ENCODE measurements at regions of chrX and their contacts with region 1.

Region 1: GRCh38 chrX:105190252-105190853 is 30.1 kb downstream of the TEX13A start:
- DNase-seq: peak; percentile 22
- H3K4me3 ChIP-seq: no peak overlapping the region
- H3K27ac ChIP-seq: no peak overlapping the region
- H3K4me1 ChIP-seq: no peaks in the 10 kb centered on the region
- H3K27me3 ChIP-seq: peaks cover 3% of the 10 kb centered on the region
- CTCF ChIP-seq: peak; percentile 78 to 93

Region 2: DNA sequence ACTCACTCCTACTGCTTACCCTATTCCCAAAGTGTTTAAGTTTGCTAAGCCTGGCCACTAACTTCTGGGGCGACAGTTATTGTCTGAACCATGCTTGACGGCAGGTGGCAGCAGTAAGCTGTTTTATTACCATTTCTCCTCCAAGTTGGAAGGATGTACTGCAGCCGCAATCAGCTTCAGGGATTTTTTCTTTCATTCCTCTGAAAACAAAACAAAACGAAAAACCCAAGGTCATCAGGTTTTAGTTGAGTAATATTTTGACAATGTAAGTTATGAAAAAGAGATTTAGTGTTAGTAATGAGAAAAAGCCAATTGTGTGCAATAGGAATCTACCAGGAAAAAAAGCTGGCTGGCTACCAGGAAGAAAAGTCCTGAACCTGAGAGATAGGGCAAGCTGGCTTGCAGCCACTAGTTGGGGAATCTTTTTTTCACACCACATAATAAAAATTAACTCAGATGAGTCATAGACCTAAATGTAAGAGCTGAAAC is 1345.1 kb before region 1 on chrX:
- CTCF ChIA-PET with region 1: no interaction called
- dilution Hi-C with region 1: no loop called
- in situ Hi-C with region 1: no loop called
- intact Hi-C with region 1: loop called (anchors 5 kb)
- DNase-seq: peak; percentile 86
- H3K4me3 ChIP-seq: no peak overlapping the region
- H3K27ac ChIP-seq: peak overlapping the region; percentile 94
- H3K4me1 ChIP-seq: peaks cover 20% of the 10 kb centered on the region
- H3K27me3 ChIP-seq: no peaks in the 10 kb centered on the region
- CTCF ChIP-seq: peak; percentile 65 to 80

Region 3: DNA sequence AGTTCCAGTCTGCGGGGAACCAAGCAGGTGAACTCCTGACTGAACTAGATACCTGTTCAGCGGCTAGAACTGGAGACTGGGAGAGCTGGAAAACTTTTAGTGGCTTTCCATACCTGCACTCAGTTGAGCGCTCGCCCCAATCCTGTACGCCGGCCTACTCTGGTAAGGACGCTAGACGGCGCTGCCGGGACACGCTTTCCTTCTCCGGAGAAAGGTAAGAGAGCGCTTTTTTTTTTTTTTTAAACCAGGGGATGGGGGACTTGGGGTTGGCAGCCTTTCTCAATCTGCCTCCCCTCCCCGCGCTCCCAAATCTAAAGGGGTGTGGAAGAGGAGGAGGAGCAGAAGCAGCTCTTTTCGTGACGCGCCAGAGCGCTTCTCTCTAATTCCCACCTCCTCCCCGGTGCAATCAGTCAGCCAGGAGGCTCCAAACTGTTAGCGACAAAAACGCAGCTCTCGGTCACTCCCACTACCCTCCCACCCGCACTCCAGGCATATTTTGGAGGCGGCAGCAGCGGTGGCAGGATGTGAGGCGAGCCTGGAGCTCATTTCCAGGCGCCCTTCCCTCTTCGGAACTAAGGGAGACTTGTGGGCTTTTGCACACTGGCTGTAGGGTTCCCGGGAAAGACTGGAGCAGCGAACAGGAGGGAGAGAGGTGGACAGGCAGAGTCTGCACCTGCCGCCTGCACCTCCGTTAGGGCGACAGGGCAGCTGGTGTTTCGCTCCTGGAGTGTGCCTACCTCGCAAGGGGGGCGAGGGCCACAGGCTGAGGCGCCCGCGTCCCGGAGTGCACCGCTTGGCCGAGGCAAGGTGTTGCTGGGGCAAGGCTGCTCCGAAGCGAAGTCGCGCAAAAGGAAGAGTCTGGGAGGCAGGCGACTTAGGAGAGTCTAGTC is 624.3 kb before region 1 on chrX and contains the start of gene IL1RAPL2:
- CTCF ChIA-PET with region 1: interaction called, 5 read pairs
- dilution Hi-C with region 1: no loop called
- in situ Hi-C with region 1: no loop called
- intact Hi-C with region 1: loop called (anchors 10 kb)
- DNase-seq: peak; percentile 58
- H3K4me3 ChIP-seq: peak within 1 kb of the TSS; percentile 46 to 55 (median 53)
- H3K27ac ChIP-seq: no peak within 1 kb of the TSS
- H3K4me1 ChIP-seq: peaks cover 3% of the 10 kb centered on the region
- H3K27me3 ChIP-seq: peaks cover 4% of the 10 kb centered on the region
- CTCF ChIP-seq: peak; percentile 64 to 84
- total RNA-seq, gene IL1RAPL2: 0.19 to 0.50 TPM

Region 4: DNA sequence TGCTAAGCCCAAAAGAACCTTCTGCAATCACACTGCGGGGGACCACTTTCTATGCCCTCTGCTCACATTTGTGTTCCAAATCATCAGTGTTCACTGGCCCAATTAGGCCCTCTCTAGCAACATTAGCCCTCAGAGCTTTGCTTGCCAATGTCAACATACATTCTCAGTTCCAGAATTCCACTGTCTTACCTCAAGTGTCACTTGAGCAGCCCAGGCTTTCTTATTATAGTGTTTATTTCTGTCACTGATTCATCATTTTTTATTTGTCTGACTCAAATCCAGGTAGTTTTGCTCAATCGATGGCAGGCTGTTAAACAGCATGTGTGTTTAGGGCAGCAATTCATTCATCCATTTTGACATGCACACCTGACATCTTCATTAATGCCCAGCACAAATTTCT is 261.0 kb before region 1 on chrX:
- CTCF ChIA-PET with region 1: no interaction called
- dilution Hi-C with region 1: no loop called
- in situ Hi-C with region 1: loop called in 1 of 2 experiments (anchors 25 kb)
- intact Hi-C with region 1: loop called (anchors 5 kb)
- DNase-seq: no peak
- H3K4me3 ChIP-seq: no peak overlapping the region
- H3K27ac ChIP-seq: no peak overlapping the region
- H3K4me1 ChIP-seq: no peaks in the 10 kb centered on the region
- H3K27me3 ChIP-seq: peaks cover 11% of the 10 kb centered on the region
- CTCF ChIP-seq: no peak

Region 5: GRCh38 chrX:105552395-105552794 is 362.0 kb after region 1 on chrX:
- CTCF ChIA-PET with region 1: no interaction called
- dilution Hi-C with region 1: no loop called
- in situ Hi-C with region 1: no loop called
- intact Hi-C with region 1: loop called (anchors 1 kb)
- DNase-seq: peak; percentile 94
- H3K4me3 ChIP-seq: no peak overlapping the region
- H3K27ac ChIP-seq: peak overlapping the region; percentile 89
- H3K4me1 ChIP-seq: peaks cover 19% of the 10 kb centered on the region
- H3K27me3 ChIP-seq: no peaks in the 10 kb centered on the region
- CTCF ChIP-seq: peak; percentile 47 to 55

Measured in mammary epithelial cell (primary cell).